ENCODE measurements at regions of chr13 and their contacts with region 1.

Region 1: DNA sequence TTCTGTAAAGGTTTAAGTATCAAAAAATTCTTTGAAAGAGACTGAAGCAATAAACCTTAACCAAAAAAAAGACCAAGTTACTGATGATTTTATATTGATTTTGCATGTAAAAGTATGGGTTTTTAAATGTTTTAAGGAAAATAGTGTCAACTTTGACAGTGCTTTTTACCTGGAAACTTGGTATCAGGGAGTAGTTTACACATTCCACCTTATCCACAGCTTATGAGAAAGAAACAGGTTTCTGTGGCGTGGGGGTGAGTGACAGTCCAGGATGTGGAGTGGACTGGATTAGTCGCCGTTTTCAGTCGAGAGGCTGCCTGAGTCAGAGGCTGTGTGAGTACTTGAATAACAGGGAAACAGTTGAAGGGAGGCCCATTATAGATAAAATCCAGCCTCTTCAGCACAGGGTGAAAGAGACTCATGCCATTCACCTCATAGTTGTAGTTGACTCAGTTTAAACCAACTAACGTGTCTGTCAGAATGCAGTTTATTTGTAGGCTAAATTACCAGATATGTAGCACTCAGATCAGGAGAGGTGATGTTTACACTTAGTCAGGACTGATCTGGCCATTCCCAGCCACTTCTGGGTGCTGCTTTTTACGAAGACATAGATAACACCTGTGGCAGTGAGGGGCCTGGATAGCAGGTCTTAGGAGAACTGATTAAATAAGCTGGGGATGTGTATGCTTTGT is 595 bp upstream of the GPR183 start:
- DNase-seq: peak; percentile 89
- H3K4me3 Mint-ChIP-seq: peak overlapping the region; percentile 93
- H3K27ac Mint-ChIP-seq: peak overlapping the region; percentile 99
- H3K4me1 Mint-ChIP-seq: peaks cover 73% of the 10 kb centered on the region
- H3K27me3 Mint-ChIP-seq: no peaks in the 10 kb centered on the region

Region 2: DNA sequence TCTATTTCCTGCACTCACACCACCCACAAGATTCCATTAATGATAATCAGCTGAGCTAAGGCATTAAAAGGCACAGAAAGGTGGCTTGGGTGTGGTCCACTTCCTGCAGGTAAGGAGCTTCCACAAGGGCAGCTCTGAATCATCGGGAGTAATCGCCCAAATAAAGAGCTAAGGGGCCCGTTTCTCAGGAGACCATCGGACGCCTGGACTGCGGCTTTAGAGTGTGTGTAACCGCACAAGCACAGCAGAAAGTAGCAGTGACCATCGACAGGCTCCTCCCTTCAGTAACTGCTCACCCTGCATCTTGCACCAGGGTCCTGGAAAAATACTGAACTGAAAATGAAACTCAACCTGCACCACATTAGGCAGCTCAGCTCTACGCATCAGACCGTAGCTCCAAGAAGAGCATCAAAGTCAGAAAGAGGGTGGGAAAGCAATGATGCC is 736.8 kb before region 1 on chr13:
- CTCF ChIA-PET with region 1: no interaction called
- intact Hi-C with region 1: loop called (anchors 5 kb)
- DNase-seq: peak; percentile 62
- H3K4me3 Mint-ChIP-seq: peak overlapping the region; percentile 76
- H3K27ac Mint-ChIP-seq: peak overlapping the region; percentile 80
- H3K4me1 Mint-ChIP-seq: peaks cover 86% of the 10 kb centered on the region
- H3K27me3 Mint-ChIP-seq: no peaks in the 10 kb centered on the region

Region 3: GRCh38 chr13:99288089-99288488 is 19.7 kb before region 1 on chr13:
- CTCF ChIA-PET with region 1: interaction called, 18 read pairs
- intact Hi-C with region 1: loop called (anchors 1 kb)
- DNase-seq: peak; percentile 89
- H3K4me3 Mint-ChIP-seq: peak overlapping the region; percentile 37
- H3K27ac Mint-ChIP-seq: peak overlapping the region; percentile 89
- H3K4me1 Mint-ChIP-seq: peaks cover 80% of the 10 kb centered on the region
- H3K27me3 Mint-ChIP-seq: no peaks in the 10 kb centered on the region

Region 4: GRCh38 chr13:99322297-99323103 is 14.7 kb after region 1 on chr13:
- CTCF ChIA-PET with region 1: interaction called, 3 read pairs
- intact Hi-C with region 1: loop called (anchors 1 kb)
- DNase-seq: peak; percentile 63
- H3K4me3 Mint-ChIP-seq: peak overlapping the region; percentile 56
- H3K27ac Mint-ChIP-seq: peak overlapping the region; percentile 87
- H3K4me1 Mint-ChIP-seq: peaks cover 75% of the 10 kb centered on the region
- H3K27me3 Mint-ChIP-seq: no peaks in the 10 kb centered on the region

Region 5: DNA sequence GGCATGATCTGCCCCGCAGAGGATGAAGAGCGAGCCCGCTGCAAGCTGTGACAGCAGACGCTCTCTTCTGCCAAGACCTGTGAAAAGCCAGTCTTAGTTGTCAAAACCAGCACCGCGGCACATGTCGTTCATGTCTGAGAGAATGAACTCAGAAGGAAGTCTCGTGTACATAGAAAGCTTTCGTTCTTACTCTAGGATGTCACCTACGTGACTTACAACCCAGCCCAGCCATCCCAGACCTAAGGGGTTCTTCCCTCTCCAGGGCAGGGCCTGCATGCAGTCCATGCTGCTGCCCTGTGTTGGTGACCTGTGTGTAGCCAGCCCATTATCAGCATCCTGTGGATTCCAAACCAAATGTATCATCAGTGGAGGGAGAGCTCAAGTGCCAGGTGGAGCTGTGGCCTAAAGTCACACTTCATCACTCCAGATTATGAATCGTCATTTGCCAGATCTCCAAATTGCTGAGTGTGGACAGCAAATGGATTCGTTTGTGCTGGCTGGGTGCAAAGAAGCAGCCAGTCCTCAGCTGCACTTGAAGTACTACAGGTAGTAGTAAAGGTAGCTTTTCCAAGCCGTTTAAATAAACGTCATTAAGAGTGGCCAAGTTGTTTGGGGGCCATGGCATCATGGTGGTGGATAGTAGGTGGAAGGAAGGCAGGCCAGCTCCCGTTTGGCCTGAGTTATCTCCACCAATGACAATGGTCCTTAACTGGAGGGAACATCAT is 73.3 kb after region 1 on chr13:
- CTCF ChIA-PET with region 1: interaction called, 9 read pairs
- intact Hi-C with region 1: loop called (anchors 1 kb)
- DNase-seq: peak; percentile 91
- H3K4me3 Mint-ChIP-seq: no peak overlapping the region
- H3K27ac Mint-ChIP-seq: peak overlapping the region; percentile 79
- H3K4me1 Mint-ChIP-seq: peaks cover 84% of the 10 kb centered on the region
- H3K27me3 Mint-ChIP-seq: no peaks in the 10 kb centered on the region

Region 6: GRCh38 chr13:99883805-99884204 is 576.0 kb after region 1 on chr13:
- CTCF ChIA-PET with region 1: no interaction called
- intact Hi-C with region 1: no loop called
- DNase-seq: no peak
- H3K4me3 Mint-ChIP-seq: no peak overlapping the region
- H3K27ac Mint-ChIP-seq: no peak overlapping the region
- H3K4me1 Mint-ChIP-seq: no peaks in the 10 kb centered on the region
- H3K27me3 Mint-ChIP-seq: no peaks in the 10 kb centered on the region

Measured in activated naive CD4-positive, alpha-beta T cell treated with anti-CD3 and anti-CD28 coated beads for 36 hours (primary cell).